ENCODE measurements at regions of chr21 and their contacts with region 1.

Region 1: GRCh38 chr21:33171616-33172169 is 58.0 kb upstream of the IFNAR2 start:
- DNase-seq: no peak
- ATAC-seq: no peak

Region 2: DNA sequence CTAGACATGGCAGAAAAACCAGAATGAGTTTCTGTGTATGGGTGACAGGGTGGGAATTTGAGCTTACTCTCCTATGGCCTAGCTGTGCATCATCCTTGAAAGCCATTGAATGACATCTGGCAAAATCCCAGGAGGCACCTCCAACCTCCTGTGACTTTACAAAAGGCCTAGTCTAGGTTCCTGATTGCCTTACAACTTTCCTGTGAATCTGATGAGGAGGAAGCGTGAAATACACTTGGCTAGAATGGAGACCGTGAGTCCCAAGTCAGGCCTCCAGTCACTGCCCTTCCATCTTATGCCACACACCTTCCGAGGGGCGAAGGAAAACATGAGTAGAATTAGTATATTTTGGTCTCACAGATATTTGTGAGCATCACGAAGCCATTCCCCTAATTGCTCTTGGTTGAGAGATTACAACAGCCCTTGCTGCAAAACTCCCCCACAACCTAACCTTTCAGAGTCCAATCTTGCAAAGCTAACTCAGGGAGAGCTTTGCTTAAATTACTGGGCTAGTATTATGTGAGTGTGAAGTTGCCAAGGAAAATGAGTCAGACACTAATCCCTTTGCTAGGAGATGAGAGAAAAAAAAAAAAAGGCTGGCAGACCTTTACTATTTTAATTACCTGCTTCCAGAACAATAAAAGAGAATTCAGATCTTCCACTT is 363.8 kb before region 1 on chr21:
- intact Hi-C with region 1: no loop called
- DNase-seq: no peak
- ATAC-seq: peak; percentile 73

Region 3: GRCh38 chr21:33078907-33079582 is 92.6 kb before region 1 on chr21:
- intact Hi-C with region 1: loop called (anchors 10 kb)
- DNase-seq: no peak
- ATAC-seq: no peak

Region 4: DNA sequence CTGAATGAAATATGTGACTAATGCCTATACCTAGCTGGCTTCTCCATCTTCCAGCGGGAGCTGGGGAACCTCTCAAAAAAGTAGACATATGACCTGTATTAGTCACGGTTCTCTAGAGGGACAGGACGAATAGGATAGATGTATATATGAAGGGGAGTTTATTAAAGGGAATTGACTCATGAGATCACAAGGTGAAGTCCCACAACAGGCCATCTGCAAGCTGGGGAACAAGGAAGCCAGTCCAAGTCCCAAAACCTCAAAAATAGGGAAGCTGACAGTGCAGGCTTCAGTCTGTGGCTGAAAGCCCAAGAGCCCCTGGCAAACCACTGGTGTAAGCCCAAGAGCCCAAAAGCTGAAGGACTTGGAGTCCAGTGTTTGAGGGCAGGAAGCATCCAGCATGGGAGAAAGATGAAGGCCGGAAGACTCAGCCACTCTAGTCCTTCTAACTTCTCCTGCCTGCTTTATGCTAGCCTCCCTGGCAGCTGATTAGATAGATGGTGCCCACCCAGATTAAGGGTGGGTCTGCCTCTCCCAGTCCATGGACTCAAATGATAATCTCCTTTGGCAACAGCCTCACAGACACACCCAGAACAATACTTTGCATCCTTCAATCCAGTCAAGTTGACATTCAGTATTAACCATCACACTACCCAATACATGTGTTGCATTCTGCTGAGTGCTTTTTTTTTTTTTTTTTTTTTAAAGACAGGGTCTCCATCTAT is 82.1 kb before region 1 on chr21:
- intact Hi-C with region 1: no loop called
- DNase-seq: peak; percentile 47
- ATAC-seq: no peak

Measured in Right ventricle myocardium superior (tissue), 1 donor.